ENCODE measurements at regions of chr1 and their contacts with region 1.

Region 1: GRCh38 chr1:90763930-90764329 is 46.8 kb upstream of the BARHL2 start:
- DNase-seq: no peak
- ATAC-seq: no peak
- H3K4me3 ChIP-seq: no peak overlapping the region
- H3K27ac ChIP-seq: no peak overlapping the region
- H3K4me1 ChIP-seq: no peaks in the 10 kb centered on the region
- H3K27me3 ChIP-seq: 0 out of 2 replicates have a peak, but pooled peaks cover 3% of the 10 kb centered on the region
- CTCF ChIP-seq: no peak
- POLR2A ChIP-seq: no peak
- RAD21 ChIP-seq: no peak

Region 2: GRCh38 chr1:90781534-90781933 is 17.6 kb after region 1 on chr1:
- CTCF ChIA-PET with region 1: no interaction called
- POLR2A ChIA-PET with region 1: no interaction called
- RAD21 ChIA-PET with region 1: no interaction called
- intact Hi-C with region 1: loop called (anchors 1 kb)
- DNase-seq: no peak
- ATAC-seq: no peak
- H3K4me3 ChIP-seq: no peak overlapping the region
- H3K27ac ChIP-seq: no peak overlapping the region
- H3K4me1 ChIP-seq: no peaks in the 10 kb centered on the region
- H3K27me3 ChIP-seq: no peaks in the 10 kb centered on the region
- CTCF ChIP-seq: no peak
- POLR2A ChIP-seq: no peak
- RAD21 ChIP-seq: no peak

Region 3: GRCh38 chr1:90902672-90903071 is 138.7 kb after region 1 on chr1:
- CTCF ChIA-PET with region 1: no interaction called
- POLR2A ChIA-PET with region 1: no interaction called
- RAD21 ChIA-PET with region 1: no interaction called
- intact Hi-C with region 1: no loop called
- DNase-seq: no peak
- ATAC-seq: no peak
- H3K4me3 ChIP-seq: no peak overlapping the region
- H3K27ac ChIP-seq: no peak overlapping the region
- H3K4me1 ChIP-seq: no peaks in the 10 kb centered on the region
- H3K27me3 ChIP-seq: no peaks in the 10 kb centered on the region
- CTCF ChIP-seq: no peak
- POLR2A ChIP-seq: no peak
- RAD21 ChIP-seq: no peak